ENCODE measurements at regions of chr13 and their contacts with region 1.

Region 1: DNA sequence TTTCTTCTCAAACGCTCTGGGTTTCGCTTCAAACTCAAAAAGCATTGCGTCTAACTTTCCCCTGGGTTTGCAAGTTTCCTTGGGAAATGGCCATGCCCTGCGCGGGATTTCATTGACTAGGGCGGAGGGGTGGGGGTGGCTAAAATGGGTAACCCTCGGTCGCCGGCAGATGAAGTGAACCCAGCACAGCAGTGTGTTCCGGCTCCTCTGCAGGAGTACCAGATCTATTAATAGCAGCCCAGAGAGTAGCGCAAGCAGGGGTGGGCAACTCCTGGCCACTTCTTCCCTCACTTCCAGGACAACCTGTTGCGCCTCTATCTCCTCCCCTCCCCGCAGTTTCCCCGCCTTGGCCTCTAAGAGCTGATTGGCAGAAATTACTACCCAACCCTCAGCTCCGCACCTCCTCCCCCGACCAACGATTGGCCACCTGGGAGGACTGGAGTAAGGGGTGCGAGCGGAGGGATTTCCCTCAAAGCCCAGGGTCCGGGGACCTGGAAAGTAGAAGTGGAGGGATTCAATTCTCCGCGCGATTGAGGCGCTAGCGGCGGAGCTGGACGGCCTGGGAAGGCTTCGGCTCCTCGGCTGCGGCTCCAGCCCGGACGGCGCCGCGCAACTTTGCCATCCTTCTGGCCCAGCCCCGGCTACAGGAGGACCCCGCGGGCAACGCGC is at the start of gene FREM2:
- DNase-seq: no peak
- ATAC-seq: no peak
- H3K4me3 Mint-ChIP-seq: peak within 1 kb of the TSS; percentile 3
- H3K27ac Mint-ChIP-seq: no peak within 1 kb of the TSS
- H3K4me1 Mint-ChIP-seq: no peaks in the 10 kb centered on the region
- H3K27me3 Mint-ChIP-seq: peaks cover 19% of the 10 kb centered on the region
- total RNA-seq, gene FREM2: not detected

Region 2: GRCh38 chr13:38670627-38671026 is 16.1 kb before region 1 on chr13:
- CTCF ChIA-PET with region 1: no interaction called
- POLR2A ChIA-PET with region 1: no interaction called
- intact Hi-C with region 1: no loop called
- DNase-seq: no peak
- ATAC-seq: no peak
- H3K4me3 Mint-ChIP-seq: no peak overlapping the region
- H3K27ac Mint-ChIP-seq: no peak overlapping the region
- H3K4me1 Mint-ChIP-seq: no peaks in the 10 kb centered on the region
- H3K27me3 Mint-ChIP-seq: peaks cover 13% of the 10 kb centered on the region

Region 3: GRCh38 chr13:38872693-38873092 is 186.0 kb after region 1 on chr13:
- CTCF ChIA-PET with region 1: no interaction called
- POLR2A ChIA-PET with region 1: no interaction called
- intact Hi-C with region 1: loop called (anchors 5 kb)
- DNase-seq: peak; percentile 68
- ATAC-seq: peak; percentile 33
- H3K4me3 Mint-ChIP-seq: no peak overlapping the region
- H3K27ac Mint-ChIP-seq: no peak overlapping the region
- H3K4me1 Mint-ChIP-seq: no peaks in the 10 kb centered on the region
- H3K27me3 Mint-ChIP-seq: peaks cover 17% of the 10 kb centered on the region